Activated naive CD4-positive, alpha-beta T cell treated with anti-CD3 and anti-CD28 coated beads for 36 hours (primary cell): ENCODE measurements at regions of chr9 and their contacts with region 1.

Region 1: GRCh38 chr9:91101611-91102168 is 260.0 kb downstream of the AUH start:
- DNase-seq: peak; percentile 97
- H3K4me3 Mint-ChIP-seq: peak overlapping the region; percentile 59
- H3K27ac Mint-ChIP-seq: peak overlapping the region; percentile 14
- H3K4me1 Mint-ChIP-seq: peaks cover 41% of the 10 kb centered on the region
- H3K27me3 Mint-ChIP-seq: peaks cover 3% of the 10 kb centered on the region

Region 2: DNA sequence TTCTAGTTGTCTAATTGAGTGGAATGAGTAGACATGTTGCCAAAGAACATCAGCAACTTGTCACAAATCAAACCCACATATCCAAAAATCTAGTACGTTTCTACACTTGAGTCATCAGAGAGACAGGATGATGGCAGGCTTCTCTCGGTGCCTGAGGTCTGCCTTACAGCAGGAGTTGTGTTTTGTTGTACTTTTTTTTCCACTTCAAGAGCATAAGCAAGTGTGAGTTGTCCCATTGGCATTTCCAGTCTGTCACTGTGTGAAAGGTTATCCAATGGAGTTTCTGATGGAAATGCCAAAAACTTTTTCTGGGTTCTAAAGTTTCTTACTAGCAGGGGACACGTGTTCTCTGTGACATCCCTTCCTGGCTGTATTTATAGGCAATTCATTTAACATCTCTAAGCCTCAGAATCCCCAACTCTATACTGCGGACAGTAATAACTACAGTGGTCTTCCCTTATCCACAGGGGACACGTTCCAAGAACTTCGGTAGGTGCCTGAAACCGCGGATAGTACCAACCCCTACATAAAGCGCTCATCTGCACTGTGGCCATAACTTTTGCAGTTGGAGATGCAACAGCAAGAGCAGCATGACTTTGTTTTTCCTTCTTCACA is 53.6 kb before region 1 on chr9:
- CTCF ChIA-PET with region 1: no interaction called
- intact Hi-C with region 1: loop called (anchors 1 kb)
- DNase-seq: peak; percentile 75
- H3K4me3 Mint-ChIP-seq: peak overlapping the region; percentile 20
- H3K27ac Mint-ChIP-seq: peak overlapping the region; percentile 89
- H3K4me1 Mint-ChIP-seq: peaks cover 44% of the 10 kb centered on the region
- H3K27me3 Mint-ChIP-seq: peaks cover 36% of the 10 kb centered on the region

Region 3: DNA sequence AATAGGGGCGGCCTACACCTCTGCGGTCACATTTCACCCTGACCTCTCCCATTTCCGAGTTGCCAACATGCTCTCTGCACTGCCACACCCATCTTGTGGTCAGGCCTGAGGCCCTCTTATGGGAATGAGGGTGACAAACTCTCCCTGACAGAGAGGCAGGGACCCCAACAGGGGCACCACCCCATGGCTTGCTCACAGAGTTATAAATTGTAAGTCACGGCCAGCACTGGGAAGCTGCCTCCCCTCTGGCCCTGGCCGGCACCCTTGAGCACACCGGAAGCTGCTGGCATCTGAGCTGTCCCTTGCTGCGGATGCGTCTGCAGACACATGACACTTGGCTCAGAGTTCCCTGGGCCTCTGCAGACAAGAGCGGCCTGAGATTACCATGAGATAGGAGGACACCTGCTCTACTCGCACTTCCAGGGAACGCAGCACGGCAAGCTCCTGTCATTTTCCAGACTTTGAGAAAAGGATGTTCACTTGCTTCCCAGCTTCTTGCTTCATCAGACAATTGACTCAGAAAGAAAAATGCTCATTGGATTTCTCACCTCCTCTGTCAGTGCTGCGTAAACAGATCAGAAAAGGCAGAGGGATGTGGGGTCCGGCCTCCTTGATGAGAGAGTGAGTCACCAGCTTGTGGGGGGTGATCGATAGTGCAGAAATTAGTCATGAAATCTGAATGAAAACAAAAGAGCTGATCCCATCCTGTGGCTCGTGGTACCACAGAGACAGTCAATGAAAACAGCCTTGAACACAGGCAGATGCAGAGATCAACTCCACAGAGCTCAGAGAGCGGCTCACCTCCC is 30.3 kb before region 1 on chr9:
- CTCF ChIA-PET with region 1: no interaction called
- intact Hi-C with region 1: loop called (anchors 1 kb)
- DNase-seq: peak; percentile 85
- H3K4me3 Mint-ChIP-seq: no peak overlapping the region
- H3K27ac Mint-ChIP-seq: peak overlapping the region; percentile 57
- H3K4me1 Mint-ChIP-seq: peaks cover 11% of the 10 kb centered on the region
- H3K27me3 Mint-ChIP-seq: peaks cover 13% of the 10 kb centered on the region

Region 4: DNA sequence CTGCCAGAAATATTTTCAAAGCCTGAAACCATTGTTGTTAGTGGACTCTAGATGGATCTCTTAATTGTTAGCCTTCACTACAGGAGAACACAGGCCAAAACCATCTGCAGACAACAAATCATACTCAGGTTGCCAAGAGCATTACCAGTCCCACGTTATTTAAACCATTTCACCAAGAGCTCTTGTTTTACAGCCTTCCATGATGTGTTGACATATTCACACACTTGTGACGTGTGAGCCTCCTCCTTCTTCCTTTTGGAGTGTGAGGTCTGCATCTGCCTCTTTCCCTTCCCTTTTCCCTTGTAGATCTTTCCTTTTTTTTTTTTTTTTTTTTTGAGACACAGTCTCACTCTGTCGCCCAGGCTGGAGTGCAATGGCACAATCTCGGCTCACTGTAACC is 19.0 kb before region 1 on chr9:
- CTCF ChIA-PET with region 1: no interaction called
- intact Hi-C with region 1: no loop called
- DNase-seq: no peak
- H3K4me3 Mint-ChIP-seq: no peak overlapping the region
- H3K27ac Mint-ChIP-seq: no peak overlapping the region
- H3K4me1 Mint-ChIP-seq: peaks cover 4% of the 10 kb centered on the region
- H3K27me3 Mint-ChIP-seq: peaks cover 2% of the 10 kb centered on the region

Region 5: DNA sequence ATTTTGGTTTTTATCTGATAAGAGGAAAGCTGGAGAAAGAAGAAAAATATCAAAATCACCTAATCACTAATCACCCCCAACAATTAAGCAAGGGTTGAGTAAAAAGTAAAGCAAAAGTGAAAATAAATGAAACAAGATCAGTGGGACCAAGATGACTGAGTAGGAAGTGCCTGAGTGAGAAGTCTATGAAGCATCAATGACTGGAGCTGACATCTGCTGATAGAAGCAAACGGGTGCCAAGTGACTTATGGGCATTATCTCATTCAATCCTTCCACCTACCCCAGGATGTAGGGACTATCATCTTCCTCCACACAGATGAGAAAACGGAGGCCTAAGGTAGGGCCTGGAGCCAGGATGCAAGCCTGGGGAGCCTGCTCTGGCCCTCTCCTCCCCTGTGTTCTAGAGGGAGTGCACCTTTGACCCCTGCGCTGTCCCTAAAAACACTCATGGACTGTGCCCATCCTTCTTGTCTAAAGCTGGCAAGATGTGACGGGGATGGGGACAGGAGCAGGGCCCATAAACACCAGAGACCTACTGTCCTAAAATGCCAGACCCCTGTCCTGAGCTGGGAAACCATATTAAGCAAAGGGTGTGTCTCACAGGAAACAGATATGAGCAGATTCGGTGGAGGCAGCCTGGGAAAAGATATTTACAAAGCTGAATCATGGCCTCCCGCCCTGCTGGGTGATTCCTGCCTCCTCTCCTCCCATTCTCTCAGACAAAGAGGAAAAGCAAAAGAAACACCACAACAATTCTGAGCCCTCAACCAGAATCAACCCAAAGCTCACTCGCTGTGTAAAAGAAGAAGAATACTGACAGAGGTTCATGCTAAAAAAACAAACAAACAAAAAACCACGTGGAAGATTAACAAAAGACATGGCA is 144.0 kb after region 1 on chr9:
- CTCF ChIA-PET with region 1: no interaction called
- intact Hi-C with region 1: loop called (anchors 1 kb)
- DNase-seq: peak; percentile 58
- H3K4me3 Mint-ChIP-seq: no peak overlapping the region
- H3K27ac Mint-ChIP-seq: peak overlapping the region; percentile 64
- H3K4me1 Mint-ChIP-seq: peaks cover 18% of the 10 kb centered on the region
- H3K27me3 Mint-ChIP-seq: no peaks in the 10 kb centered on the region

Region 6: GRCh38 chr9:91258451-91258850 is 156.8 kb after region 1 on chr9:
- CTCF ChIA-PET with region 1: no interaction called
- intact Hi-C with region 1: no loop called
- DNase-seq: no peak
- H3K4me3 Mint-ChIP-seq: no peak overlapping the region
- H3K27ac Mint-ChIP-seq: no peak overlapping the region
- H3K4me1 Mint-ChIP-seq: peaks cover 8% of the 10 kb centered on the region
- H3K27me3 Mint-ChIP-seq: no peaks in the 10 kb centered on the region

Region 7: GRCh38 chr9:91312717-91313344 is 211.1 kb after region 1 on chr9:
- CTCF ChIA-PET with region 1: no interaction called
- intact Hi-C with region 1: no loop called
- DNase-seq: no peak
- H3K4me3 Mint-ChIP-seq: no peak overlapping the region
- H3K27ac Mint-ChIP-seq: no peak overlapping the region
- H3K4me1 Mint-ChIP-seq: peaks cover 4% of the 10 kb centered on the region
- H3K27me3 Mint-ChIP-seq: no peaks in the 10 kb centered on the region

Region 8: GRCh38 chr9:91395553-91396471 is 294.1 kb after region 1 on chr9:
- CTCF ChIA-PET with region 1: no interaction called
- intact Hi-C with region 1: loop called (anchors 1 kb)
- DNase-seq: peak; percentile 41
- H3K4me3 Mint-ChIP-seq: no peak overlapping the region
- H3K27ac Mint-ChIP-seq: peak overlapping the region; percentile 74
- H3K4me1 Mint-ChIP-seq: peaks cover 11% of the 10 kb centered on the region
- H3K27me3 Mint-ChIP-seq: peaks cover 12% of the 10 kb centered on the region

Region 9: GRCh38 chr9:91825422-91825821 is 723.7 kb after region 1 on chr9:
- CTCF ChIA-PET with region 1: no interaction called
- intact Hi-C with region 1: no loop called
- DNase-seq: no peak
- H3K4me3 Mint-ChIP-seq: no peak overlapping the region
- H3K27ac Mint-ChIP-seq: no peak overlapping the region
- H3K4me1 Mint-ChIP-seq: no peaks in the 10 kb centered on the region
- H3K27me3 Mint-ChIP-seq: no peaks in the 10 kb centered on the region